Activated T-helper 1 cell treated with anti-CD3 and anti-CD28 coated beads, Interleukin-12 subunit alpha, Interleukin-12 subunit beta, Interleukin-2, Interleukin-4 antibody, amounts not matched to agents 30 ng/mL and 10 ng/mL and 1 ng/mL, durations not matched to agents 14 hours and 24 hours and 36 hours (primary cell): ENCODE measurements at regions of chr10 and their contacts with region 1.

Region 1: GRCh38 chr10:28532383-28533175 is at the start of gene WAC:
- DNase-seq: peak; percentile 94
- H3K4me3 Mint-ChIP-seq: peak within 1 kb of the TSS; percentile 97
- H3K27ac Mint-ChIP-seq: peak within 1 kb of the TSS; percentile 100
- H3K4me1 Mint-ChIP-seq: peaks cover 54% of the 10 kb centered on the region
- H3K27me3 Mint-ChIP-seq: no peaks in the 10 kb centered on the region
- total RNA-seq, gene WAC: 130 and 135 TPM in 2 replicates

Region 2: GRCh38 chr10:27155066-27155754 is 1377.4 kb before region 1 on chr10 and contains the start of gene MASTL:
- intact Hi-C with region 1: loop called (anchors 2 kb)
- DNase-seq: peak; percentile 93
- H3K4me3 Mint-ChIP-seq: peak within 1 kb of the TSS; percentile 99
- H3K27ac Mint-ChIP-seq: peak within 1 kb of the TSS; percentile 99
- H3K4me1 Mint-ChIP-seq: peaks cover 42% of the 10 kb centered on the region
- H3K27me3 Mint-ChIP-seq: no peaks in the 10 kb centered on the region
- total RNA-seq, gene MASTL: 33.2 and 33.7 TPM in 2 replicates

Region 3: GRCh38 chr10:27742195-27743011 is 790.2 kb before region 1 on chr10:
- intact Hi-C with region 1: loop called (anchors 5 kb)
- DNase-seq: peak; percentile 73
- H3K4me3 Mint-ChIP-seq: peak overlapping the region; percentile 65
- H3K27ac Mint-ChIP-seq: no peak overlapping the region
- H3K4me1 Mint-ChIP-seq: peaks cover 34% of the 10 kb centered on the region
- H3K27me3 Mint-ChIP-seq: peaks cover 63% of the 10 kb centered on the region

Region 4: GRCh38 chr10:28334296-28334695 is 198.3 kb before region 1 on chr10:
- intact Hi-C with region 1: loop called (anchors 1 kb)
- DNase-seq: peak; percentile 66
- H3K4me3 Mint-ChIP-seq: peak overlapping the region; percentile 81
- H3K27ac Mint-ChIP-seq: peak overlapping the region; percentile 99
- H3K4me1 Mint-ChIP-seq: peaks cover 67% of the 10 kb centered on the region
- H3K27me3 Mint-ChIP-seq: peaks cover 21% of the 10 kb centered on the region

Region 5: DNA sequence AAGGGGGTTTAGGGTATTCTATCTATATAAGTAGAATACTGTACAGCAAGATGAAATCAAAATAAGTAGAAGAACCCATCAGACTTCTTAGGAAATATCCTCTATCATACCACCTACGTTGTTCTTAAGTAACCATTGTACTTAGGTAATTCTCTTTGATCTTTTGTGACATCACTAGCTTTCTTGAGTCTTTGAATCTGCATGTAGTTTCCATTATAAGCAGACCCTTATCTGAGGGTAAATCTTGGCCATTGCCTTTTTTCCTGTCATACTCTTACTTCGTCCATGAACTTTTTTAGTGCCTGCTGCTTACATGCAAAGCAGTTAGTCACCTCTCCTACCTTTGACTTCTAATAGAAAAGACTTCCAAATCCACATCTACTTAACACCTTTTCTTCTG is 49.3 kb after region 1 on chr10:
- intact Hi-C with region 1: loop called (anchors 2 kb)
- DNase-seq: no peak
- H3K4me3 Mint-ChIP-seq: no peak overlapping the region
- H3K27ac Mint-ChIP-seq: peak overlapping the region; percentile 63
- H3K4me1 Mint-ChIP-seq: peaks cover 62% of the 10 kb centered on the region
- H3K27me3 Mint-ChIP-seq: no peaks in the 10 kb centered on the region

Region 6: GRCh38 chr10:28769091-28769604 is 236.6 kb after region 1 on chr10:
- intact Hi-C with region 1: no loop called
- DNase-seq: no peak
- H3K4me3 Mint-ChIP-seq: no peak overlapping the region
- H3K27ac Mint-ChIP-seq: no peak overlapping the region
- H3K4me1 Mint-ChIP-seq: no peaks in the 10 kb centered on the region
- H3K27me3 Mint-ChIP-seq: no peaks in the 10 kb centered on the region

Region 7: GRCh38 chr10:30027057-30028005 is 1494.8 kb after region 1 on chr10:
- intact Hi-C with region 1: loop called (anchors 5 kb)
- DNase-seq: peak; percentile 93
- H3K4me3 Mint-ChIP-seq: peak overlapping the region; percentile 73
- H3K27ac Mint-ChIP-seq: peak overlapping the region; percentile 93
- H3K4me1 Mint-ChIP-seq: peaks cover 45% of the 10 kb centered on the region
- H3K27me3 Mint-ChIP-seq: peaks cover 22% of the 10 kb centered on the region